ENCODE measurements at regions of chr22 and their contacts with region 1.

Region 1: GRCh38 chr22:50030297-50031188 is 18.0 kb upstream of the IL17REL start:
- DNase-seq: peak; percentile 75 to 82 (median 79)
- ATAC-seq: peak; percentile 89
- H3K4me3 ChIP-seq: no peak overlapping the region
- H3K27ac ChIP-seq: no peak overlapping the region
- H3K4me1 ChIP-seq: peaks cover 10% of the 10 kb centered on the region
- H3K27me3 ChIP-seq: no peaks in the 10 kb centered on the region
- CTCF ChIP-seq: peak; percentile 82 to 97 (median 93)
- POLR2A ChIP-seq: no peak

Region 2: GRCh38 chr22:49532869-49533765 is 497.4 kb before region 1 on chr22:
- intact Hi-C with region 1: no loop called
- DNase-seq: peak in 1 of 4 donors; percentile 4
- ATAC-seq: no peak
- H3K4me3 ChIP-seq: no peak overlapping the region
- H3K27ac ChIP-seq: no peak overlapping the region
- H3K4me1 ChIP-seq: no peaks in the 10 kb centered on the region
- H3K27me3 ChIP-seq: no peaks in the 10 kb centered on the region
- CTCF ChIP-seq: no peak
- POLR2A ChIP-seq: no peak

Region 3: DNA sequence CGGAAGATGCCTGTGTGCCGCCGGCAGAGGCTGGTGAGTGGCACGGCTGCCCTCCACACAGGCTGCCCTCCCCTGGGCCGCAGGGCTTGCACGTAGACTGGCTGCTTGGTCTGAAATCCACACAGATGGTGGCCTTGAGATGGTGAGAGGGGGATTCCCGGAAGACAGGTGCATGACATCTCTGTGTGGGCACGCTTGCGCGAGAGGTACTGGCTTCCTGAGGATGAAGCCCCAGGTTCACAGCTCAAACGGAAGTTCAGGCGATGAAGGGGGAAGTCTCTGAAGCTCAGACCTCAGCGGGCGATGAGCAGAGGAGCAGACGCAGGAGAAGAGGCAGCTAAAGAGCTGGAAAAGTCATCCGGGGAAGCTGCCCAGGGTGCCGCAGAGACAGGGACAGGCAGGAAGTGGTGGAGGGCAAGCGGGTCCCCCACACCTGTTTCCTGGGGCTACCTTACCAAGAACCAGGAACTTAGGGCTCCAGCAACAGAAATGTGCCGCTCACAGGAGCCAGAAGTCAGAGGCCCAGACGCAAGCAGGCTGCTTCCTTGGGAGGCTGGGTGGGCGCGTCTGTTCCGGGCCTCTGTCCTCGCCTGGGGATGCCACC is 104.9 kb before region 1 on chr22:
- intact Hi-C with region 1: loop called (anchors 2 kb)
- DNase-seq: no peak
- ATAC-seq: no peak
- H3K4me3 ChIP-seq: no peak overlapping the region
- H3K27ac ChIP-seq: no peak overlapping the region
- H3K4me1 ChIP-seq: peaks cover 11% of the 10 kb centered on the region
- H3K27me3 ChIP-seq: no peaks in the 10 kb centered on the region
- CTCF ChIP-seq: no peak
- POLR2A ChIP-seq: no peak

Region 4: GRCh38 chr22:50058906-50059880 is 28.6 kb after region 1 on chr22:
- intact Hi-C with region 1: no loop called
- DNase-seq: no peak
- ATAC-seq: no peak
- H3K4me3 ChIP-seq: no peak overlapping the region
- H3K27ac ChIP-seq: no peak overlapping the region
- H3K4me1 ChIP-seq: peaks cover 14% of the 10 kb centered on the region
- H3K27me3 ChIP-seq: peaks cover 0 to 9% of the 10 kb centered on the region in 2 donors
- CTCF ChIP-seq: no peak
- POLR2A ChIP-seq: no peak

Measured in body of pancreas (tissue), 4 donors.